ENCODE measurements at regions of chr5 and their contacts with region 1.

Region 1: GRCh38 chr5:179355976-179356974 is 11.0 kb upstream of the ADAMTS2 start:
- DNase-seq: no peak
- ATAC-seq: no peak
- H3K4me3 ChIP-seq: no peak overlapping the region
- H3K27ac ChIP-seq: no peak overlapping the region
- H3K4me1 ChIP-seq: no peaks in the 10 kb centered on the region
- H3K27me3 ChIP-seq: 0 out of 2 replicates have a peak, but pooled peaks cover 2% of the 10 kb centered on the region
- CTCF ChIP-seq: no peak

Region 2: DNA sequence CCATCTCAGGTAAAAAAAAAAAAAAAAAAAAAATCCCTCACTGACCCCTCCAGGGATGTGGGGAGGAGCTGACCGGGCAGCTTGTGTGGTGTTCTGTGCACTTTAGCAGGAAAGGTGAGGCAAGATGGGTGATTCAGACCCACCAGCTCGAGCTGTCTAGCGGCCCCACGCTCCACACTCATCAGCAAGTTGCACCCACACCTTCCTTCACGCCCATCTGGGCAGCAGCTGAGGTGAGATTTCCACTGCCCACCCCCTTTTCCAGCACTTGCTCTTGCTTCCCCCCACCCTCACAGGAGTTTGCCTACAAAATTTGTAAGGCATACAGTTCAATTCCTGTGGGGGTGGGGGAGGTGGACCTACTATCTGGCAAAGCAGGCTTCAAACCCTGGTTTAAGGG is 555.3 kb before region 1 on chr5:
- CTCF ChIA-PET with region 1: no interaction called
- POLR2A ChIA-PET with region 1: interaction called, 16 read pairs
- in situ Hi-C with region 1: no loop called
- intact Hi-C with region 1: no loop called
- DNase-seq: no peak
- ATAC-seq: no peak
- H3K4me3 ChIP-seq: no peak overlapping the region
- H3K27ac ChIP-seq: no peak overlapping the region
- H3K4me1 ChIP-seq: no peaks in the 10 kb centered on the region
- H3K27me3 ChIP-seq: no peaks in the 10 kb centered on the region
- CTCF ChIP-seq: no peak

Region 3: DNA sequence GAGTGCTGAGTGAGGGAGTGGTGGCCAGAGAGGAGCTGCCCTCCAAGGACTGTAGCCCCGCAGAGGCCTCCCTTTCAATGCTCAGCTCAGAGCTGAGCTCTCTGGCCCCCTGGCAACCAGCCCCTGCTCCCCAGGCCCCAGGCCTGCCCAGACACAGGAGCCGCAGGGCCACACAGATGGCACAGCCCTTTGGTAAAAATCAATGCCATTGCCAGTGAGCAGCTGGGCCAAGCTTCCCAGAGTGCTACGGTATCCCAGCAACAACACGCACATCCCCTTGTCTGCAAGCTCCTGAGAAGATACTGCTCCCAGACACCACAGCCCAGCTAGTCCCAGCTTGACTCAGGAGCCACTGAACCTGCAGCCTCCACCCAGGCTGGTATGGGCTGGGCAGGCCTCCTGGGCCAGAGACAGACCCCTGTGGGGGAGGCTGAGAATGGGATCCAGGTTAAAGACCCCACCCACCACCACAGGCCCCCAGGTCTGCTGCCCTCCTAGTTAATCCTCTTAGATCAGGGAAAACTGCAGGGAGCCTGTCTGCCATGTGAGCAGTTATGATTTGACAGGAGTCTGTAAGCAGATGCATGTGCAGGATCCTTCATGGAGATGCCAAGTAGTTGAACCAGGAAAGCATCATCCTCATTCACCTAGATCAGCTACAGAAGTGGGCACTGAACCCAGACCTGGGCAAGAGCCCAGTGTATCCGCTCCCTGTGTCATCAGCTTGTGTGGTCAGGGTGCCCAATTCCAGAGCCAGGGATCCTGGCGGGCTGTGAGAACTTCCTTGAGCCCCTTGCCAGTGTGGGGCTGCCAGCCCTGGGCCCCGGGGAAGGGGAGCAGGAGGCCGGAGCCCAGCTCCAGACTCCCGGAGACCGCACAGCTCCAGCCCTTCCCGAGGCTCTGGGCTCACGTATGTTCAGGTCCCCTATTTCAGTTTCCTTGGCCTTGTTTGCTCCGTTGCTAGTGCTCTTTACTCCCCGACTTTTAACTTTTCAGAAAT is 15.7 kb after region 1 on chr5:
- CTCF ChIA-PET with region 1: no interaction called
- POLR2A ChIA-PET with region 1: no interaction called
- in situ Hi-C with region 1: no loop called
- intact Hi-C with region 1: no loop called
- DNase-seq: no peak
- ATAC-seq: no peak
- H3K4me3 ChIP-seq: no peak overlapping the region
- H3K27ac ChIP-seq: no peak overlapping the region
- H3K4me1 ChIP-seq: no peaks in the 10 kb centered on the region
- H3K27me3 ChIP-seq: no peaks in the 10 kb centered on the region
- CTCF ChIP-seq: no peak